ENCODE measurements at regions of chr12 and their contacts with region 1.

Region 1: DNA sequence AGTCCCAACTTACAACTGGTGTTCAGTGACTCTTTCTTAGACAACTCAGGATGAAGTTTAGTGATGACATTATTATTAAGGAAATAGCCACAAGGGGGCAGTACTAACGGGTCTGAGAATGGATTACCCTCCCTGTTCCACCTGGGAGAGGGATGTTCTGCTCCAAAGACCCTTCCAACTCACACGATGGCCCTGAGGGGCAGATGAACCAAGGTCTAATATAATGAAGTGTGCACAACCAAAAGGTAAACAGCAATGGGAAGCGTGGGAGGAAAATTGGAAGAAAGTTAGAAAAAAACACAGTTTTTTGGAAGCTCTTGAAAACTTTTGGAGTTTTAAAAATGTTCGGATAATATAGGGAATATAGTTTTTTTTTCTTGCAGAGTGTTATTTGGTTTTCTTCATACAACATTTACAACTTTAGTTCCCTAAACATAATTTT is 24.0 kb downstream of the FGF6 start:
- DNase-seq: no peak
- H3K4me3 Mint-ChIP-seq: no peak overlapping the region
- H3K27ac Mint-ChIP-seq: no peak overlapping the region
- H3K4me1 Mint-ChIP-seq: peaks cover 8% of the 10 kb centered on the region
- H3K27me3 Mint-ChIP-seq: peaks cover 15% of the 10 kb centered on the region

Region 2: DNA sequence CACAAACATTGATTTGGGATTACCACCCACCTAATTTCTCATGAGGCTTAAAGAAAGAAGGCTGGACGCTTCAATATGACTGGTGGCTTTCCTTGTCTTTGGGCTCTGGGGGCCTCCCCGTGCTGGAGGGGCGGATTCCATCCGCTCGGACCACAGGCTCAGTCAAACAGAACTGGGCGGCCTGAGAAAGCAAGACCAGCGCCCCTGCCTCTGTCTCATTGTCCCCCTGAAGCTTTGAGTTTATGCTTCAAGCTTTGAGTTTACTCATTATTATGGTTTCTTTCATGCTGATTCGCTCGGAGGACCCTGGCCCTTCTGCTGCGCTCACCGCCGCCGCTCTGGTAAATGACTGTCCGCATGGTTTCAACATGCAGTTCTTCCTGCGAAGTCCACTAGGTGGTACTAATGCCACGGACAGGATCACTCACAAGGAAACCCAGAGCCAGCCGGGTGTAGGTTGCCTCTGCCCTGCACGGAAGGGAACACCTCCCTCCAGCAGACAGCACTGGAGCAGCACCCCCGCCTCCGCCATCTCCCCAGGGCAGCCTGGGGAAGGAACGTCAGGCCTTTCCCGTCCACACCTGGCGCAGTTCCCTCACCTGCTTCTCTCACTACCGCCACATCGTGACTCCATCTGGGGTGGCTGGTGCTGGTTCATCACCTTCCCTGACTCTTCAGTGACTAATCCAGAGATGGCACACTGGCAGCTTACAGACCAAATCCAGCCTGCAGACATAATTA is 113.8 kb before region 1 on chr12:
- intact Hi-C with region 1: no loop called
- DNase-seq: no peak
- H3K4me3 Mint-ChIP-seq: no peak overlapping the region
- H3K27ac Mint-ChIP-seq: peak overlapping the region; percentile 42
- H3K4me1 Mint-ChIP-seq: no peaks in the 10 kb centered on the region
- H3K27me3 Mint-ChIP-seq: no peaks in the 10 kb centered on the region

Region 3: GRCh38 chr12:4460761-4461160 is 39.1 kb after region 1 on chr12:
- intact Hi-C with region 1: no loop called
- DNase-seq: no peak
- H3K4me3 Mint-ChIP-seq: no peak overlapping the region
- H3K27ac Mint-ChIP-seq: no peak overlapping the region
- H3K4me1 Mint-ChIP-seq: no peaks in the 10 kb centered on the region
- H3K27me3 Mint-ChIP-seq: peaks cover 38% of the 10 kb centered on the region

Region 4: DNA sequence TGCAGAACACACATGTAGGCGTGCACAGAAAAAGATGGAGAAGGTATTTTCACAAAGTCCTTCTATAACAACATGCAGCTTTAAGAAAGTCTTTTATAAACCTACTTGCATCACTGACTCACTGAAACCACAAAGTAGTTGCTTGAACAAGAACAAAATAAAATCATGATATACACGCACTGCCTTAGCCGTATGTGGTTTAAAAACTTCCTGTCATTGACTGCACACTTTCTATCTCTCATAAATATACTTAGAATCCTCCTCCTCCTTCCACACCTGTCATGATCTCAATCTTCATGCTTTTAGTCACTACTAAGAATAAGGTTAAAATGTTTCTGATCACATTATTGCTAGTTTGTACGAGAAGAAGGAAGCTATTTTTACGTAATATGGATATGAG is 85.3 kb after region 1 on chr12:
- intact Hi-C with region 1: loop called (anchors 10 kb)
- DNase-seq: peak; percentile 26
- H3K4me3 Mint-ChIP-seq: peak overlapping the region; percentile 31
- H3K27ac Mint-ChIP-seq: peak overlapping the region; percentile 35
- H3K4me1 Mint-ChIP-seq: peaks cover 26% of the 10 kb centered on the region
- H3K27me3 Mint-ChIP-seq: no peaks in the 10 kb centered on the region

Region 5: GRCh38 chr12:4526923-4527546 is 105.4 kb after region 1 on chr12:
- intact Hi-C with region 1: loop called (anchors 1 kb)
- DNase-seq: no peak
- H3K4me3 Mint-ChIP-seq: no peak overlapping the region
- H3K27ac Mint-ChIP-seq: no peak overlapping the region
- H3K4me1 Mint-ChIP-seq: peaks cover 7% of the 10 kb centered on the region
- H3K27me3 Mint-ChIP-seq: no peaks in the 10 kb centered on the region

Measured in activated T-helper 2 cell treated with anti-CD3 and anti-CD28 coated beads, Interferon-gamma antibody, Interleukin-2, Interleukin-4, amounts not matched to agents 10 μg/mL and 5 μg/mL and 100 μg/mL, durations not matched to agents 14 hours and 24 hours and 36 hours (primary cell).